Endothelial cell of umbilical vein (primary cell): ENCODE measurements at regions of chr1 and their contacts with region 1.

Region 1: GRCh38 chr1:99728494-99729235 is 37.8 kb downstream of the FRRS1 start:
- DNase-seq: peak; percentile 74
- H3K4me3 ChIP-seq: peak overlapping the region in 1 of 3 experiments; percentile 34
- H3K27ac ChIP-seq: peak overlapping the region; percentile 13
- H3K4me1 ChIP-seq: peaks cover 19% of the 10 kb centered on the region
- H3K27me3 ChIP-seq: no peaks in the 10 kb centered on the region
- CTCF ChIP-seq: peak; percentile 41 to 70
- POLR2A ChIP-seq: no peak

Region 2: GRCh38 chr1:98903261-98903660 is 825.4 kb before region 1 on chr1:
- CTCF ChIA-PET with region 1: no interaction called
- POLR2A ChIA-PET with region 1: no interaction called
- dilution Hi-C with region 1: no loop called
- intact Hi-C with region 1: loop called (anchors 10 kb)
- DNase-seq: peak; percentile 91
- H3K4me3 ChIP-seq: no peak overlapping the region
- H3K27ac ChIP-seq: peak overlapping the region; percentile 85
- H3K4me1 ChIP-seq: peaks cover 49% of the 10 kb centered on the region
- H3K27me3 ChIP-seq: no peaks in the 10 kb centered on the region
- CTCF ChIP-seq: no peak
- POLR2A ChIP-seq: no peak

Region 3: DNA sequence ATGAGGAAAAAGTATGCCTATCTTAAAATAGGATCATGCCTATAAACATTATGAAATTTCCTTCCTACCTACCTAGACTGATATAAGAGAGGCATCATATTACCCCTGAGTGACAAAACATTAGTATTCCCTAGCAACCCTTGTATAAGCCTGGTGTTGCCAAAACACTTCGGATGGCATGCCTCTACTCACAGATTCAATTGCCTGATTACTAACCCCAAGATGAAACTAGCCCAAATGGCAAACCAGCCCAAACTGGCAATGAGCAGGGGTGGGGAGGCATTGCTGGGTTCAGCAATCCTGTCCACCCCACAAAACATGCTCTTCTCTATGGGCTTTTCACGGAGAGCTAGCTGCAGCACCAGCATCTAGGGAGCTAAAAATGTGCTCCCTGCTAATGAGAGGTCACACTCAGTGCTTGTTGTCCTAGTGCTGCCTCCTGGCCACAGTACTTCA is 68.9 kb before region 1 on chr1:
- CTCF ChIA-PET with region 1: no interaction called
- POLR2A ChIA-PET with region 1: no interaction called
- dilution Hi-C with region 1: no loop called
- intact Hi-C with region 1: loop called (anchors 2 kb)
- DNase-seq: peak; percentile 91
- H3K4me3 ChIP-seq: no peak overlapping the region
- H3K27ac ChIP-seq: peak overlapping the region; percentile 62
- H3K4me1 ChIP-seq: peaks cover 81% of the 10 kb centered on the region
- H3K27me3 ChIP-seq: no peaks in the 10 kb centered on the region
- CTCF ChIP-seq: no peak
- POLR2A ChIP-seq: no peak

Region 4: GRCh38 chr1:99758073-99758511 is 29.4 kb after region 1 on chr1:
- CTCF ChIA-PET with region 1: no interaction called
- POLR2A ChIA-PET with region 1: no interaction called
- dilution Hi-C with region 1: no loop called
- intact Hi-C with region 1: no loop called
- DNase-seq: no peak
- H3K4me3 ChIP-seq: no peak overlapping the region
- H3K27ac ChIP-seq: no peak overlapping the region
- H3K4me1 ChIP-seq: no peaks in the 10 kb centered on the region
- H3K27me3 ChIP-seq: peaks cover 0 to 3% of the 10 kb centered on the region in 2 experiments
- CTCF ChIP-seq: no peak
- POLR2A ChIP-seq: no peak

Region 5: GRCh38 chr1:99829269-99829668 is 100.6 kb after region 1 on chr1:
- CTCF ChIA-PET with region 1: no interaction called
- POLR2A ChIA-PET with region 1: no interaction called
- dilution Hi-C with region 1: no loop called
- intact Hi-C with region 1: no loop called
- DNase-seq: no peak
- H3K4me3 ChIP-seq: no peak overlapping the region
- H3K27ac ChIP-seq: no peak overlapping the region
- H3K4me1 ChIP-seq: no peaks in the 10 kb centered on the region
- H3K27me3 ChIP-seq: no peaks in the 10 kb centered on the region
- CTCF ChIP-seq: no peak
- POLR2A ChIP-seq: no peak